ENCODE measurements at regions of chr5 and their contacts with region 1.

Region 1: DNA sequence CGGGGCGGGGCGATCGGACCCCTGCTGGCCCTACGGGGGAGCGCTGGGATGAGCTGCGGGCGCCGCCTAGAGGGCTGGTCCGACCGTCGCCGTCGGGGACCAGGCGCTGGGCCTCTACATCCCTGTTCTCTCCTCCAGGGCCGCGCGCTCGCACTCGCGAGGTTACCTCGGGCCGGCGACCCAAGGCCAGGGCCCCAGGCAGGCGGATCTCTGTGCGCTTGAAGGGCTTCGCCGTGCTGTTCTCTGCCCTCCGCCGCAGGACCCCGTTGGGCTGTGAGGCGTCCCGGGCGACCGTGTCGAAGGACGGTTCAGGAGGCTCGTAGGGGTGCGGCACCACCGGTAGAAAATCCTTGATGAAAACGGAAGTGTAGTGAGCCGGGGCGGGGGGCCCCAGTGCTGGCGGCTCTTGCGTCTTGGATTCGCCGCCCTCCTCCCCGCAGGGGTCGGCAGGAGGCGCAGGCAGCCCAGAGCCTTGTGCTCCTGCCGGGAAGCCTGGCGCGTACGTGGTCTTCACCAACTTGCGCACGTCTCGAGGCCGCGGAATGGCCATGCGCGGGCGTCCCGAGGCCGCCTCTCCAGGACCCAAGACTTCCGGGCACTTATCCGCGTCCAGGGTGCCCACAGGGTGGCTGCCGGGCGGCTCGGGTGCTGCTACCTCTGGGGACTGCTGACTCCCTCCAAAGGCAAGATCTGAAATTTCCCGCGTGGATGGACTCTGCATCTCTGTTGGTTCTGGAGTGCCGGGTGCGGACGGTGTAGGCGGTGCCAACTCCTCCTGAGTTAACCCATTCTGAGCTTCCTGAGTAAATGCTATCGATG is 2.0 kb downstream of the PROB1 start:
- DNase-seq: peak; percentile 74 to 87
- ATAC-seq: peak; percentile 61 to 80 (median 67)
- H3K4me3 ChIP-seq: peak overlapping the region; percentile 62
- H3K4me3 Mint-ChIP-seq: peak overlapping the region; percentile 88
- H3K27ac ChIP-seq: peak overlapping the region; percentile 17
- H3K27ac Mint-ChIP-seq: peak overlapping the region; percentile 62 to 95
- H3K4me1 ChIP-seq: peaks cover 62% of the 10 kb centered on the region
- H3K4me1 Mint-ChIP-seq: peaks cover 39 to 47% of the 10 kb centered on the region in 2 donors
- H3K27me3 ChIP-seq: no peaks in the 10 kb centered on the region
- H3K27me3 Mint-ChIP-seq: no peaks in the 10 kb centered on the region
- CTCF ChIP-seq: peak; percentile 69

Region 2: DNA sequence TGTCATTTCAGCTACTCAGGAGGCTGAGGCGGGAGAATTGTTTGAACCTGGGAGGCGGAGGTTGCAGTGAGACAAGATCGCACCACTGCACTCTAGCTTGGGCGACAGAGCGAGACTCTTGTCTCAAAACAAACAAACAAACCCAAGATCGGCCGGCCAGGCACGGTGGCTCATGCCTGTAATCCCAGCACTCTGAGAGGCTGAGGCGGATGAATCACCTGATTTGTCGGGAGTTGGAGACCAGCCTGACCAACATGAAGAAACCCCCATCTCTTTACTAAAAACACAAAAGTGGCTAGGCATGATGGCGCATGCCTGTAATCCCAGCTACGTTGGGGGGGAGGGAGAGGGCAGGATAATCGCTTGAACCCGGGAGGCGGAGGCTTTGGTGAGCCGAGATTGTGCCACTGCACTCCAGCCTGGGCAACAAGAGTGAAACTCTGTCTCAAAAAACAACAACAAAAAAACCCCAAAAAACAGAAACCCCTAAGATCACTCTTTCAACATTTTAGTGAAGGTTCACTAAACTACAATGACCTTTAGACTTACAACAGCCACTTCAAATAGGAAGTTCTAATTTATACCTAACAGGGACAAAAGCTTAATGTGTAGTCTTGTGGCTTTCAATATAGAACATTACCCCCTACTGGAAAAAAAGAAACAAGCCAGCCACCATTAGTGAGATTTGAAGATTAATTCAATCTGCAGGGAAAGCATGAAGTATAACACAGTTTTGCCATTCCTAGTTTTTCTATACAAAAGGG is 824.6 kb before region 1 on chr5:
- intact Hi-C with region 1: loop called (anchors 10 kb)
- DNase-seq: no peak
- ATAC-seq: no peak
- H3K4me3 ChIP-seq: no peak overlapping the region
- H3K4me3 Mint-ChIP-seq: peak overlapping the region; percentile 58
- H3K27ac ChIP-seq: no peak overlapping the region
- H3K27ac Mint-ChIP-seq: peak overlapping the region; percentile 87 to 92
- H3K4me1 ChIP-seq: peaks cover 46% of the 10 kb centered on the region
- H3K4me1 Mint-ChIP-seq: peaks cover 49 to 59% of the 10 kb centered on the region in 2 donors
- H3K27me3 ChIP-seq: no peaks in the 10 kb centered on the region
- H3K27me3 Mint-ChIP-seq: no peaks in the 10 kb centered on the region
- CTCF ChIP-seq: no peak

Region 3: DNA sequence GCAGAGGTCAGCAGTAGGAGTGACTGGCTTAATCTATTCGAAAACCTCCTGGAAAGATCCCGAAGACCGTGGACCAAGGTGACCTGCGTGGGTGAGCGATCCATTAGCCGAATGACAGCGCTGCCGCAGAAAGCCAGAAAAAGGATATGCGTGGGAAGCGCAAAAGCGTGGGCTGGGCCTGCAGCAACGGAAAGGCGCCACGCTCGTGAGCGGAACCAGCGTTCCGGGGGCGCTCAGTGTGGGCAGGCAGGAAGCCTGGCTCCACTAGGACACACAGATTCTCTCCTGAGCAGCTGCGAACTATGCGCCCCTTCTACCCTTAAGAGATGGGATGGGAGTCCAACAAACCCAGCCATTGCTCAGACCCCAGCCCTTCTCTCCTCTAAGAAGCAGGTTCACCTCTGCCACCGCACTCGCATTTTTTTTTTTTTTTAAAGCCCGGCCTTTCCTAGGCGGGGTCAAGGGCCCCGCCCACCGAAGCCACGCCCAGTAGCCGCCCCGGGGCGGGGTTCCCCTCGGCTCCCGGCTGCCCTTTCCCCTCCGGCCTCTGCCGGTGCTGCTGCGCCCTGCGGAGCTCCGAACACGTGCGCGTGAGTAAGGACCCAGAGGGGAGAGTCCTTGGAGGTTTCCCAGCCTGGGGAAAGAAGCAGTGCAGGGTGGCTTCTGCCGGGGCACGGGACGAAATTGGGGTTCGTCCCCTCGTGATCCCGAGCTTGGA is 119.2 kb before region 1 on chr5:
- intact Hi-C with region 1: loop called (anchors 5 kb)
- DNase-seq: peak; percentile 89 to 91
- ATAC-seq: peak; percentile 97 to 99 (median 98)
- H3K4me3 ChIP-seq: peak overlapping the region; percentile 53
- H3K4me3 Mint-ChIP-seq: peak overlapping the region; percentile 88
- H3K27ac ChIP-seq: peak overlapping the region; percentile 30
- H3K27ac Mint-ChIP-seq: peak overlapping the region; percentile 81 to 86
- H3K4me1 ChIP-seq: peaks cover 24% of the 10 kb centered on the region
- H3K4me1 Mint-ChIP-seq: peaks cover 25 to 39% of the 10 kb centered on the region in 2 donors
- H3K27me3 ChIP-seq: no peaks in the 10 kb centered on the region
- H3K27me3 Mint-ChIP-seq: no peaks in the 10 kb centered on the region
- CTCF ChIP-seq: no peak

Region 4: DNA sequence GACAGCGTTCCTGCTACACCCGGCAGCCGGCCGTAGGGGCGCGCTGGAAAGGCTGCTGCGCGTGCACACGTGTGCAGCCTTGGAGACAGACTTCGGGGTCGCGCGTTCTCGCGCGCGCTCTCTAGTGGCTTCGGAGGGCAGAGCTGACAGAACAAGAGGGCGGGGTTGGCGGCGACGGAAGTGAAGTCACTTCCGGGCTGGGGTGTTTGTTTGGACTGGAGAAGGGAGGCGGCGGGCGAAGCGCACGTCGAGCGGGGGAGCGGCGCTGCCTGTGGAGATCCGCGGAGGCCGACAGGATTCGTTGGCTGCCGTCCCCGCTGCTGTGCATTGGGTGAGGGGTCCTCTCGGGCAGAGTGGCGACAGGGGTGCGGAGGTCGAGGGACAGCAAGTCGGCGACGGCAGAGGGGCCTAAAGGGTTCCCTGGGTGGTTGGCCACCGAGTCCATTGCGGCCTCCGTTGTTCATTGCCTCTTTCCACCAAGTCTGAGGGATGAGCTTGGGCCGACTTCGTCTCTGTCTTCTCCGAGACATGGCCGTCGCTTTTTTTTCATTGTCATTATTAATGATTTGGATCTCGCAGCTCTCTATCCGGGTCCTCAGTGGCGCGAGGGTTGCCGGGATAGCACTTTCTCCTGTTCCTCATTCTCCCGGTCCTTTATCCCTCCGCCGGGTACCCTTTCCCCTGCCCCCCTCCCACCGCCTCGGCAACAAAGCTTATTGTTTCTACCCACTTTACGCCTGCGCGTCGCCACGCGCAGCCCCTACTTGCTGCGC is 51.1 kb before region 1 on chr5 and contains the start of gene PAIP2:
- intact Hi-C with region 1: loop called (anchors 2 kb)
- DNase-seq: peak; percentile 96 to 99
- ATAC-seq: peak; percentile 88 to 97 (median 92)
- H3K4me3 ChIP-seq: peak within 1 kb of the TSS; percentile 91
- H3K4me3 Mint-ChIP-seq: peak within 1 kb of the TSS; percentile 96
- H3K27ac ChIP-seq: peak within 1 kb of the TSS; percentile 97
- H3K27ac Mint-ChIP-seq: peak within 1 kb of the TSS; percentile 95 to 98
- H3K4me1 ChIP-seq: peaks cover 21% of the 10 kb centered on the region
- H3K4me1 Mint-ChIP-seq: peaks cover 41 to 47% of the 10 kb centered on the region in 2 donors
- H3K27me3 ChIP-seq: no peaks in the 10 kb centered on the region
- H3K27me3 Mint-ChIP-seq: no peaks in the 10 kb centered on the region
- CTCF ChIP-seq: peak; percentile 67
- total RNA-seq, gene PAIP2: 105 to 126 (median 110) TPM

Measured in natural killer cell (primary cell).